SK-N-SH (cell line): ENCODE measurements at regions of chrX and their contacts with region 1.

Region 1: GRCh38 chrX:19593690-19594089 is 78.4 kb upstream of the MAP3K15 start:
- DNase-seq: peak; percentile 59
- H3K4me3 ChIP-seq: no peak overlapping the region
- H3K27ac ChIP-seq: peak overlapping the region in 1 of 2 experiments; percentile 49; a peak in 1 of 4 replicates
- H3K4me1 ChIP-seq: peaks cover 5 to 7% of the 10 kb centered on the region in 2 experiments; a peak in 2 of 4 replicates
- H3K27me3 ChIP-seq: no peaks in the 10 kb centered on the region
- CTCF ChIP-seq: peak; percentile 81
- EP300 ChIP-seq: no peak
- RAD21 ChIP-seq: peak; percentile 83

Region 2: DNA sequence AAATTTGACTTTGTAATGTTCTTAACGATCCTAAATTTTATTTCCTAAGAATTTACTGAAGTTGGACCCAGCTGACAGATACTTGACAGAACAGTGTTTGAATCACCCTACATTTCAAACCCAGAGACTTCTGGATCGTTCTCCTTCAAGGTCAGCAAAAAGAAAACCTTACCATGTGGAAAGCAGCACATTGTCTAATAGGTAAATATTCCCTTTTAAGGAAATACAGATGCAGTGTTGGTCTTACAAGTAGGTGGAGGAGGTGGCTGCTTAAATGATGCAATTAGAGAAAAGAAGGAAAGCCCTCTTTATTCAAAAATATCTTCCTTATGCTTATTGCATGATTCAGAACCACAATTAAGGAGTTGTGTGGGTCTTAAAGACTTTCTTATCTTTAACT is 995.3 kb before region 1 on chrX:
- CTCF ChIA-PET with region 1: no interaction called
- POLR2A ChIA-PET with region 1: no interaction called
- DNase-seq: no peak
- H3K4me3 ChIP-seq: no peak overlapping the region
- H3K27ac ChIP-seq: no peak overlapping the region
- H3K4me1 ChIP-seq: no peaks in the 10 kb centered on the region; a peak in 1 of 4 replicates
- H3K27me3 ChIP-seq: no peaks in the 10 kb centered on the region
- CTCF ChIP-seq: no peak
- EP300 ChIP-seq: no peak
- RAD21 ChIP-seq: no peak

Region 3: DNA sequence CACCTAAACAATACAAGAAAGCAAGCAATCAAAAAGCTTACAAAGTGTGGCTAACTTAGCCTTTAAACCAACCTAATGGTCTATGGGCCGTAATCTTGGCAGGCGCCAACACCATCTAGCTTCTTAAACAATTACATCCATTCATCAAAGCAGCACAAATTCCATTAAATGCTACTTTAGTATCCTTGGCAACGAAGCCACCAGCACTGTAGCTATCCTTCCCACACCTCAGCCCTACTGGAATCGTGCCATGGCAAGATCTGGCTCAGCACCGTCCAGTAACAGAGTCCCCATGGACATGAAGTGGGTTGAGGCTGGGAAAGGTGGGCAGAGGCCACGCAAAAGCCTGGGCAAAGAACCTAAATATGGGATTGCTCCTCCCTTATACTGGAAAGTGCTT is 13.2 kb after region 1 on chrX:
- CTCF ChIA-PET with region 1: no interaction called
- POLR2A ChIA-PET with region 1: no interaction called
- DNase-seq: no peak
- H3K4me3 ChIP-seq: no peak overlapping the region
- H3K27ac ChIP-seq: no peak overlapping the region
- H3K4me1 ChIP-seq: peaks cover 0 to 4% of the 10 kb centered on the region in 2 experiments; a peak in 2 of 4 replicates
- H3K27me3 ChIP-seq: no peaks in the 10 kb centered on the region
- CTCF ChIP-seq: no peak
- EP300 ChIP-seq: no peak
- RAD21 ChIP-seq: no peak

Region 4: DNA sequence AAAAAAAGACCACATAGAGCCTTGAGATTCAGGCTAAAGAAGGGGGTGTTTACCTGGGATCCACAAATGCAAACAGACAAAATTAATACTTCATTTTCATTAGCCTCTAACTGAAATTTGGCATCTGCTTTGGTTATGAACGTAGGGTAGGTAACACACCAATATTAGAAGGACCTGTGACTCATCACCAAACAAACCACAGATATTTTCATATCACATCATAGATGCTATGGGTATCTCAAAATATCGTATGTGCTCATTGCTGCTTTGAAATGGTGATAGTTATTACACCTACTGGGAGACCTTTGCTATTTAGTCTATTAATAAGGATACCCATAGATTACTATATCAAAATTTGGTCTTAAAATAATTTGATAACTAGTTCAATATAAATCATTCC is 102.2 kb after region 1 on chrX:
- CTCF ChIA-PET with region 1: no interaction called
- POLR2A ChIA-PET with region 1: no interaction called
- DNase-seq: no peak
- H3K4me3 ChIP-seq: no peak overlapping the region
- H3K27ac ChIP-seq: no peak overlapping the region
- H3K4me1 ChIP-seq: peaks cover 8 to 11% of the 10 kb centered on the region in 2 experiments; a peak in 3 of 4 replicates
- H3K27me3 ChIP-seq: no peaks in the 10 kb centered on the region
- CTCF ChIP-seq: no peak
- EP300 ChIP-seq: no peak
- RAD21 ChIP-seq: no peak

Region 5: GRCh38 chrX:19887911-19888879 is 294.5 kb after region 1 on chrX:
- CTCF ChIA-PET with region 1: interaction called, 26 read pairs
- POLR2A ChIA-PET with region 1: no interaction called
- DNase-seq: peak; percentile 70
- H3K4me3 ChIP-seq: peak overlapping the region; percentile 50 to 52
- H3K27ac ChIP-seq: peak overlapping the region; percentile 55 to 61
- H3K4me1 ChIP-seq: peaks cover 0 to 7% of the 10 kb centered on the region in 2 experiments; a peak in 1 of 4 replicates
- H3K27me3 ChIP-seq: no peaks in the 10 kb centered on the region
- CTCF ChIP-seq: peak; percentile 66
- EP300 ChIP-seq: no peak
- RAD21 ChIP-seq: peak; percentile 87